Natural killer cell (primary cell): ENCODE measurements at regions of chr13 and their contacts with region 1.

Region 1: DNA sequence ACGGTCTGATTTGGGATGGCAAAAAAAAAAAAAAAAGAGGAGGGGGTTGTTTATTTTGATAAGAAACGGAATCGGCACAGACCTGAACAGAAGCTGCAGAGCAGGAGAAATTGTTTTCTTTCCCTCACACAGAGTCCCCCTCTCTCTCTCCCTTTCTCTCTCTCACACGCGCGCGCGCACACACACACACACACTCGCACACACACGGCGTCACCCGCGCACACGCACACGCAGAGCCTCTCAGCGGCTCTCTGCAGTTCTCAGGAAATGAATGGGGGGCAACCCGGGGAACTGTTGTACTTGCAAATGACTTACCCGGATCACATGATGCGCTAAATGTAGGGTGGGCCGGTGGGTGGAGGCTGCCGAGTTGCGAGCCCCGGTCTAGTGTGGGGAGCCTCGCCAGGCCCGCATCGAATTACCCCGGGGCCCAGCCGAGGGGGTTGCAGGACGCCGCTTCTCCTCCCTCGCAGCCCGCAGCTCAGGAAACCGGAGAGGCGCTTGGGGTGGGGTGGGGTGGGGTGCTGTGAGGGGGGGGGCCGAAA is 475 bp downstream of the KLF12 start:
- DNase-seq: peak; percentile 82 to 97
- ATAC-seq: peak; percentile 62 to 85 (median 73)
- H3K4me3 ChIP-seq: peak overlapping the region; percentile 73
- H3K4me3 Mint-ChIP-seq: peak overlapping the region; percentile 97
- H3K27ac ChIP-seq: peak overlapping the region; percentile 99
- H3K27ac Mint-ChIP-seq: peak overlapping the region in 1 of 2 donors; percentile 98
- H3K4me1 ChIP-seq: peaks cover 35% of the 10 kb centered on the region
- H3K4me1 Mint-ChIP-seq: peaks cover 44 to 46% of the 10 kb centered on the region in 2 donors
- H3K27me3 ChIP-seq: no peaks in the 10 kb centered on the region
- H3K27me3 Mint-ChIP-seq: no peaks in the 10 kb centered on the region
- CTCF ChIP-seq: no peak

Region 2: DNA sequence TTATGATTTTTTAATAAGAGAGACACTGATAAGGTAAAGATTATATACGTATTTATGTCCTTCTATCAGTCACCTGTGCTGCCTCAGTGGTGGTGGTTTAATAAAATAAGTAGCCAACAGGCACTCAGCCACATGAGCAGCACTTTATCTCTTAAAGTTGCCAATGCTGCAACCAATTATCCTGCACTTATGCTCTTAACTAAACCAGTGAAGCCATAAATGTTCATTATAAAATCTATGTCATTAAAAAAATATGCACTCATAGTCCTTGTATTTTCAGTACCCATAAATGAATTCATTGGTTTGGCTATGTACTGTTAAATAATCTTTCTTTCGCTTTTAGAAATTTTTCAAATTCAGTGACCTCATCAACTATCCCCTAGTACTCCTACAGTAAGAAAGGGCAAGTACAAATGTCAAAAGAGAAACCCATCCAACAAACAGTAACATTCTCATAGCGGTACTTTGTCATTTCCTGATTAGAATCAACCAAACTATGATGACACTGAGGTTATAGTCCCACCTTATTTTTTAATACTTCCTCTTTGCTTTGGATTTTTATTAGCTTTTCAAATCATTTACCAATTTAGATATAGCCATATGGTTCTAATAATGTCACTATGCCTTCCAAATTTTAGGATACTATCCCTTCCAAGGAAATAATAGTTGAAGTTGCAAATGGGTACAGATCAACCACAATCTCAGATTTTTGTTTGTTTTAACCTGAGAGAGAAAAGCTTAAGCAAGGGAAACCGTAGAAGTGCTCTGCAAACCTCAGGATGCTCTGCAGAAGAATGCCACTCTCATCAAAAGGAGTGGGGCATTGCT is 190.4 kb before region 1 on chr13:
- intact Hi-C with region 1: loop called (anchors 2 kb)
- DNase-seq: peak in 1 of 2 donors; percentile 67
- ATAC-seq: peak; percentile 82 to 88 (median 87)
- H3K4me3 ChIP-seq: no peak overlapping the region
- H3K4me3 Mint-ChIP-seq: peak overlapping the region; percentile 51
- H3K27ac ChIP-seq: peak overlapping the region; percentile 76
- H3K27ac Mint-ChIP-seq: peak overlapping the region; percentile 81 to 83
- H3K4me1 ChIP-seq: peaks cover 22% of the 10 kb centered on the region
- H3K4me1 Mint-ChIP-seq: peaks cover 69 to 72% of the 10 kb centered on the region in 2 donors
- H3K27me3 ChIP-seq: no peaks in the 10 kb centered on the region
- H3K27me3 Mint-ChIP-seq: no peaks in the 10 kb centered on the region
- CTCF ChIP-seq: no peak

Region 3: DNA sequence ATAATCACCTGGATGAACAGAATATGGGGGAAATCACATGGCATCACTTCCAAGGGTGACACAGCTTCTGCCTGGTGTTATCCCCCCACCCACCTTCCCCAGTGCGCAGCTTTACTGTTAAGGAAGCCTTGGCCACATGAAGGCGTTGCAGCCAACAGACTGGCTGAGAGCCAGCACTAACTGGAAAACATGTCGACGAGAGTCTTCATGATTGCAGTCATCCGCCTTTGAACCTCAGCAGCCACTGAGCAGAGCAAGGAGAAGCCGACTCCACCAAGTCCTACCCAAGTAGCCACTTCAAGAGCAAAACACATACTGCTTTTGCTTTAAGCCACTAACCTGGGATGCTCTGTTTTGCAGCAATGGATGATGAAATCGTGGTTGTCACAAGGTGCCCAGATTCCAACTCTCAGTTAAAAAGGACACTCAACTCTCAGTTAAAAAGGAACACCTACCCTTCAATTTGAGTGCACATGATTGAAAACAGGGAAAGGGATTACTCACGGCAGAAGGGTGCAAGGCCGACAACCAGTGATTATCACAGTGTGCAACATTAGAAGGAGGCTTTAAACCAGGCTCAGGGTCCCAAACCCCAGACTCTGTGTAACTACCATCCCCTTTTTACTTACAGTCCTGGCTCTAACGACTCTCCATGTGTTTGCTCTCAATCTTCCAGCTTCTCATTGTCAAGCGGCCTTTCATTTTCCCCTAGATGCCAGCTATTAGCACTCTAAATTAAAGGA is 148.6 kb before region 1 on chr13:
- intact Hi-C with region 1: no loop called
- DNase-seq: peak in 1 of 2 donors; percentile 92
- ATAC-seq: peak in 1 of 3 donors; percentile 52
- H3K4me3 ChIP-seq: no peak overlapping the region
- H3K4me3 Mint-ChIP-seq: peak overlapping the region; percentile 73
- H3K27ac ChIP-seq: no peak overlapping the region
- H3K27ac Mint-ChIP-seq: peak overlapping the region; percentile 80 to 83
- H3K4me1 ChIP-seq: peaks cover 9% of the 10 kb centered on the region
- H3K4me1 Mint-ChIP-seq: peaks cover 37% of the 10 kb centered on the region in 2 donors
- H3K27me3 ChIP-seq: no peaks in the 10 kb centered on the region
- H3K27me3 Mint-ChIP-seq: no peaks in the 10 kb centered on the region
- CTCF ChIP-seq: no peak

Region 4: GRCh38 chr13:74040200-74040599 is 93.5 kb before region 1 on chr13:
- intact Hi-C with region 1: loop called (anchors 5 kb)
- DNase-seq: peak in 1 of 2 donors; percentile 49
- ATAC-seq: peak in 2 of 3 donors; percentile 61 to 63
- H3K4me3 ChIP-seq: no peak overlapping the region
- H3K4me3 Mint-ChIP-seq: no peak overlapping the region
- H3K27ac ChIP-seq: no peak overlapping the region
- H3K27ac Mint-ChIP-seq: peak overlapping the region in 1 of 2 donors; percentile 7
- H3K4me1 ChIP-seq: peaks cover 17% of the 10 kb centered on the region
- H3K4me1 Mint-ChIP-seq: peaks cover 73 to 75% of the 10 kb centered on the region in 2 donors
- H3K27me3 ChIP-seq: no peaks in the 10 kb centered on the region
- H3K27me3 Mint-ChIP-seq: no peaks in the 10 kb centered on the region
- CTCF ChIP-seq: peak; percentile 27

Region 5: DNA sequence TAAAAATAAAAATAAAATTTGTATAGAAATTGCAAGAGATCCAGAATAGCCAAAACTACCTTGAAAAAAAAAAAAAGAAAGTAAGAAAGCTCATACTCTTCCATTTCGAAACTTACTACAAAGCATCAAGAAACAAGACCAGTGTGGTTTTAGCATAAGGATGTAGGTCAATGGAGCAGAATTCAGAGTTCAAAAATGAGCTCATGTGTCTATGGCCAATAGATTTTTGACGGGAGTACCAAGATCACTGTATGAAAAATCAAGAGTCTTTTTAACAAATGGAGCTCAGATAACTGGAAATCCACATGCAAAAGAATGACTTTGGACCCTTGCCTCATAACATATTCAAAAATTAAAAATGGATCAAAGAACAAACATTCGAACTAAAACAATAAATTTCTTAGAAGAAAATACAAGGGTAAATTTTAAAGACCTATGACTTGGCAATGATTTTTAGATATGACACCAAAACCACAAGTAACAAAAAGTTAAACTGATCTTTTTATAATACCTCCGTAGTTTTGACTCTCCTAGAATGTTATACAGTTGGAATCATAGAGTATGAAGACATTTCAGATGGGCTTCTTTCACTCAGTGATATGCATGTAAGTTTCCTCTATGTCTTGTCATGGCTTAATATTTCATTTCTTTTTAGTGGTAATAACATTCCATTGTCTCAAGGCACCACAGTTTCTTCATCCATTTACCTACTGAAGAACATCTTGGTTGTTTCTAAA is 42.7 kb before region 1 on chr13:
- intact Hi-C with region 1: loop called (anchors 2 kb)
- DNase-seq: peak in 1 of 2 donors; percentile 53
- ATAC-seq: peak; percentile 68 to 77 (median 71)
- H3K4me3 ChIP-seq: peak overlapping the region; percentile 5
- H3K4me3 Mint-ChIP-seq: peak overlapping the region; percentile 77
- H3K27ac ChIP-seq: peak overlapping the region; percentile 57
- H3K27ac Mint-ChIP-seq: peak overlapping the region; percentile 83 to 90
- H3K4me1 ChIP-seq: peaks cover 20% of the 10 kb centered on the region
- H3K4me1 Mint-ChIP-seq: peaks cover 79 to 83% of the 10 kb centered on the region in 2 donors
- H3K27me3 ChIP-seq: no peaks in the 10 kb centered on the region
- H3K27me3 Mint-ChIP-seq: no peaks in the 10 kb centered on the region
- CTCF ChIP-seq: no peak

Region 6: GRCh38 chr13:74270018-74270417 is 136.3 kb after region 1 on chr13:
- intact Hi-C with region 1: no loop called
- DNase-seq: no peak
- ATAC-seq: no peak
- H3K4me3 ChIP-seq: no peak overlapping the region
- H3K4me3 Mint-ChIP-seq: no peak overlapping the region
- H3K27ac ChIP-seq: no peak overlapping the region
- H3K27ac Mint-ChIP-seq: no peak overlapping the region
- H3K4me1 ChIP-seq: no peaks in the 10 kb centered on the region
- H3K4me1 Mint-ChIP-seq: peaks cover 19 to 23% of the 10 kb centered on the region in 2 donors
- H3K27me3 ChIP-seq: no peaks in the 10 kb centered on the region
- H3K27me3 Mint-ChIP-seq: peaks cover 0 to 2% of the 10 kb centered on the region in 2 donors
- CTCF ChIP-seq: no peak

Region 7: GRCh38 chr13:74287724-74288169 is 154.0 kb after region 1 on chr13:
- intact Hi-C with region 1: loop called (anchors 1 kb)
- DNase-seq: peak; percentile 40 to 98
- ATAC-seq: peak; percentile 52 to 65 (median 61)
- H3K4me3 ChIP-seq: peak overlapping the region; percentile 19
- H3K4me3 Mint-ChIP-seq: peak overlapping the region; percentile 93
- H3K27ac ChIP-seq: peak overlapping the region; percentile 76
- H3K27ac Mint-ChIP-seq: peak overlapping the region; percentile 93 to 95
- H3K4me1 ChIP-seq: peaks cover 20% of the 10 kb centered on the region
- H3K4me1 Mint-ChIP-seq: peaks cover 50 to 61% of the 10 kb centered on the region in 2 donors
- H3K27me3 ChIP-seq: no peaks in the 10 kb centered on the region
- H3K27me3 Mint-ChIP-seq: no peaks in the 10 kb centered on the region
- CTCF ChIP-seq: no peak